HAP-1 (cell line): ENCODE measurements at regions of chr4 and their contacts with region 1.

Region 1: DNA sequence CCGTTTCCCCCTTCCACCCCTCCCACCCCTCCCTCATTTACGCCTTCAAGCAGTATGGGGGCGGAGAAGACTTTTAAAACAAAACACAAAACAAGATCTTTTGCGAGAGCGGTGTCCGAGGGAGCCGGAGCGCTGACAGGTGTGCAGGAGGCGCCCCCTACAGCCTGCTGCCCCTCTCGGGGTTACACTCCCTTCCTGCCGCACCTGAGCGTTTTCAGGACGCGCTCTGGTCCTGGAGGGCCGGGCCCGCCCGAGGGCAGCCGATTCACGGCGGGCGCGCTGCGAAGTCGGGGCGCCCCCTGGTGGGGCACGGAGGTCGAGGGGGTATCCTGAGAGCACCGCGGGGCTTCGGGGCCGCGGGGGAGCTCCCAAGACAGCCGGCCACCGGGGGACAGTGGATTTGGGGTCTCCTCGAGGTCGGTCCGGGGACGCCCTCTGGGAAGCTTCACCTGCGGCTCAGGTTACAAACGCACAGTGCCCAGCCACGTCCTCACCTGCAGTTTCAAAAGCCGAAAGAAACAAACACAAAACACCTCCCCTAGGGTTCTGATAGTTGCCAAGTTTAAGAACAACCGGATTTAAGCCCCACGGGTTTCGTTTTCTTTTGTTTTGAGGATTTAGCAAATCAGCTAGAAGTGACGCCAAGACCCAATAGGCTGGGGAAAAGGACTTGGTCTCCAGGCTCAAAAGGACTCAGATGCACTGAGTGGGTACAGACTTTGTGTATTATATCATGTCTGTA is 8.0 kb upstream of the NEUROG2 start:
- DNase-seq: peak; percentile 81 to 94
- H3K4me3 ChIP-seq: peak overlapping the region; percentile 28
- H3K4me1 ChIP-seq: peaks cover 34% of the 10 kb centered on the region
- H3K27me3 ChIP-seq: no peaks in the 10 kb centered on the region

Region 2: DNA sequence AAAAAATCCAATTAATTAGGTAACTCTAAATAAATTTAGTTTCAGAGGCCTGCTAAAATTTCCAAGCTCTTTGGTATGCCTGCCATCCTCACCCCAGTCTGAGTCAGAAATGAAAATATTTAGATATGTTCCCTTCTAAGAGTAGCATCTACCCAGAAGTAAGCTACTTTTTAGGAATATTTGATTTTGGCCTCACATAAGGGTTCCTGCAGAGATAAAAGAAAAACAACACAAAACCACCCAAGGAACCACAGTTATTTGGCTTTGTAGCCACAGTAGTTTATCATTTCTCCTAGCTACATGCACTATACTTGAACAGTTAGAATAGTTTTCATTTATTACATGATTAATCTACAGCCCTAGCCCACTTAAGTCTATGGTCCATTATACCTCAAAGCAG is 571.2 kb before region 1 on chr4:
- in situ Hi-C with region 1: no loop called
- DNase-seq: no peak
- H3K4me3 ChIP-seq: no peak overlapping the region
- H3K4me1 ChIP-seq: no peaks in the 10 kb centered on the region
- H3K27me3 ChIP-seq: no peaks in the 10 kb centered on the region

Region 3: GRCh38 chr4:112327965-112328733 is 195.8 kb before region 1 on chr4:
- in situ Hi-C with region 1: loop called (anchors 5 kb)
- DNase-seq: peak in 1 of 2 experiments; percentile 90
- H3K4me3 ChIP-seq: no peak overlapping the region
- H3K4me1 ChIP-seq: peaks cover 5% of the 10 kb centered on the region
- H3K27me3 ChIP-seq: no peaks in the 10 kb centered on the region

Region 4: DNA sequence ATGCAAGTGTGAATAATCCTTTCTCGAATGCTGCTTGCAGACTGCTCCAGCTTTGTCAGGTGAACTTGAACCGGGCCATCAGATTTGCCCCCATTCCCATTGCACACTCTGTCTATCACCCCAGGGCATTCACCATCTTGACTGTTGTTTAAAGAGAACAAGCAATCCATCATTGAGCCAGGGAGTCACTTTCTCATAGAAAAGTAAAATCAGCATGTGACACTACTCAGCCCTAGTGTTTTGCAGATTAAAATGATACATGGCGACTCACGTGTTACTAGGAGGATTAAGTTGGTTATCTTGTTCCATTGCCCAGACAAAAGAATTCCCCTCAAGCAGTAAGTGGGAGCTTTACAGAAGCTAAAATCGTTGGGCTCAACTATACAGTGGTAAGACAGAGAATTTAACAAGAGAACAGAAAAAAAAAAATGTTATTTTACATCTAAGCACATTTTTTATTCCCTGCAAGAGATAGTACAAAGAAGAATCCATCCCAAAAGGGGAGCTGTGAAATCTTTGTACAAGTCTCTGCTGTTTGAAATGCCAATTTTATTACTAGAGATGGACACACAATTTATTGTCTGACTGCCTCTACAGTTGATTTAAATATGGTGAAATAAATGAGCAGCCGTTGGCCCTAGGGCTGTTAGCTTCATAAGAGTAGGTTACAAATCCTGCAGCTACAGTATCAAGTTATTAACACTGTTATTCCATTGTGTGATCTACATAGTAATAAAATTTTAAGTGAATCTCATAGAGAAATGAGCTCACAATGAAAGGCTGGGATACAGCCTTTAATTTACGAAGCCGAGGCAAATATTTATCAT is 75.4 kb before region 1 on chr4:
- in situ Hi-C with region 1: loop called (anchors 5 kb)
- DNase-seq: peak; percentile 93 to 99
- H3K4me3 ChIP-seq: no peak overlapping the region
- H3K4me1 ChIP-seq: peaks cover 35% of the 10 kb centered on the region
- H3K27me3 ChIP-seq: no peaks in the 10 kb centered on the region